CD4-positive, alpha-beta memory T cell (primary cell): ENCODE measurements at regions of chr7 and their contacts with region 1.

Region 1: DNA sequence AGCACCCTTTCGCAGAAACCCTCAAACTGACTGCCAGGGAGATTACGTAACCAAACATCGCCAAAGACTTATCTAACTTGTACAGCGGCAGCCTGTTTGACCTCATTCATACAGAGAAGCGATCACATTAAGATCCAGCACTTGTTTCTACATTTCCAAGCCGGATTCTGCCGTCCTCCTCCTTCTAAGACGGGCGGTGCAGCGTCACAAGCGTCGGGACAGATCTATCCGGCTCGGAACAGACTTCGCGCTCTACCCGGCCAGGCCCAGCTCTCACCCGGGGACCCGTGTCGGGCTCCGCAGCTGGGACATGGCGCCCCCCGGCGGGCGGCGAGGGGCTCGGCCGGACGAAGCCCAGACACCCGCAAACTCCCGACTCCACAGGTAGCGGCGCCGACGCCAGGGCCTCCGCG is 373 bp downstream of the H2AZ2 start:
- DNase-seq: peak; percentile 91 to 93 (median 92)
- H3K4me3 ChIP-seq: peak overlapping the region; percentile 49 to 62
- H3K4me3 Mint-ChIP-seq: peak overlapping the region; percentile 87 to 98 (median 96)
- H3K27ac ChIP-seq: peak overlapping the region; percentile 90
- H3K27ac Mint-ChIP-seq: peak overlapping the region; percentile 97 to 100 (median 100)
- H3K4me1 ChIP-seq: peaks cover 29% of the 10 kb centered on the region
- H3K4me1 Mint-ChIP-seq: peaks cover 18 to 46% (median 25%) of the 10 kb centered on the region in 4 donors
- H3K27me3 ChIP-seq: no peaks in the 10 kb centered on the region
- H3K27me3 Mint-ChIP-seq: peaks cover 0 to 1% of the 10 kb centered on the region in 2 donors

Region 2: GRCh38 chr7:44573464-44574286 is 273.8 kb before region 1 on chr7 and contains the start of gene DDX56:
- CTCF ChIA-PET with region 1: no interaction called
- POLR2A ChIA-PET with region 1: interaction called, 24 read pairs
- intact Hi-C with region 1: no loop called
- DNase-seq: peak; percentile 87 to 93 (median 88)
- H3K4me3 ChIP-seq: peak within 1 kb of the TSS; percentile 93
- H3K4me3 Mint-ChIP-seq: peak within 1 kb of the TSS; percentile 94 to 99 (median 96)
- H3K27ac ChIP-seq: peak within 1 kb of the TSS; percentile 94
- H3K27ac Mint-ChIP-seq: peak within 1 kb of the TSS; percentile 97 to 99 (median 99)
- H3K4me1 ChIP-seq: peaks cover 30% of the 10 kb centered on the region
- H3K4me1 Mint-ChIP-seq: peaks cover 26 to 41% (median 34%) of the 10 kb centered on the region in 4 donors
- H3K27me3 ChIP-seq: no peaks in the 10 kb centered on the region
- H3K27me3 Mint-ChIP-seq: no peaks in the 10 kb centered on the region
- total RNA-seq, gene DDX56: 109 to 114 TPM

Region 3: GRCh38 chr7:44633254-44634186 is 214.0 kb before region 1 on chr7:
- CTCF ChIA-PET with region 1: interaction called, 5 read pairs
- POLR2A ChIA-PET with region 1: interaction called, 37 read pairs
- intact Hi-C with region 1: loop called (anchors 2 kb)
- DNase-seq: peak; percentile 76 to 93 (median 85)
- H3K4me3 ChIP-seq: peak overlapping the region in 1 of 2 donors; percentile 30
- H3K4me3 Mint-ChIP-seq: peak overlapping the region; percentile 21 to 88 (median 75)
- H3K27ac ChIP-seq: peak overlapping the region; percentile 96
- H3K27ac Mint-ChIP-seq: peak overlapping the region; percentile 97 to 100 (median 100)
- H3K4me1 ChIP-seq: peaks cover 100% of the 10 kb centered on the region
- H3K4me1 Mint-ChIP-seq: peaks cover 66 to 98% (median 88%) of the 10 kb centered on the region in 4 donors
- H3K27me3 ChIP-seq: no peaks in the 10 kb centered on the region
- H3K27me3 Mint-ChIP-seq: no peaks in the 10 kb centered on the region

Region 4: DNA sequence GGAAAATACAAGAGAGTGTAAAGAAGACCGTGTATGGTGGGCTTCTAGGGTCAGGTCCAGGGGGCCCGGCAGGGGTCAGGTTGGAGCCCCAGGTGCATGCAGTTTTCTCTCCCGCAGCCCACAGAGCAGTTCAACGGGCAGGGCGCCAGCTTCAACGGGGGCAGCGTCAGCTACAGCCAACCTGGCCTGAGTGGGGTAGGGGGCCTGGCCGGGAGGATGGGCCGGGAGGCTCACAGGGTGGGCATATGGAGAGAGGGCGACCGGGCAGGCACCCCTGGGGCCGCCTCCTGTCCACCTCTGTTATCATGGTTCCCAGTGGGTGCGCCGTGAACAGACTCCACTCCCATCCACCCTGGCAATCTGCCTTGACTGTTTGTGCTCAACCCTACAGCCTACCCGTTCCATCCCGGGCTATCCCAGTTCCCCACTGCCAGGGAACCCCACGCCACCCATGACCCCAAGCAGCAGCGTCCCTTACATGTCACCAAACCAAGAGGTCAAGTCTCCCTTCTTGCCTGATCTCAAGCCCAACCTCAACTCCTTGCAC is 87.4 kb before region 1 on chr7:
- CTCF ChIA-PET with region 1: no interaction called
- POLR2A ChIA-PET with region 1: no interaction called
- intact Hi-C with region 1: no loop called
- DNase-seq: no peak
- H3K4me3 ChIP-seq: no peak overlapping the region
- H3K4me3 Mint-ChIP-seq: no peak overlapping the region
- H3K27ac ChIP-seq: no peak overlapping the region
- H3K27ac Mint-ChIP-seq: peak overlapping the region in 3 of 7 donors; percentile 46 to 57 (median 53)
- H3K4me1 ChIP-seq: peaks cover 9% of the 10 kb centered on the region
- H3K4me1 Mint-ChIP-seq: peaks cover 0 to 15% (median 2%) of the 10 kb centered on the region in 4 donors
- H3K27me3 ChIP-seq: no peaks in the 10 kb centered on the region
- H3K27me3 Mint-ChIP-seq: no peaks in the 10 kb centered on the region

Region 5: DNA sequence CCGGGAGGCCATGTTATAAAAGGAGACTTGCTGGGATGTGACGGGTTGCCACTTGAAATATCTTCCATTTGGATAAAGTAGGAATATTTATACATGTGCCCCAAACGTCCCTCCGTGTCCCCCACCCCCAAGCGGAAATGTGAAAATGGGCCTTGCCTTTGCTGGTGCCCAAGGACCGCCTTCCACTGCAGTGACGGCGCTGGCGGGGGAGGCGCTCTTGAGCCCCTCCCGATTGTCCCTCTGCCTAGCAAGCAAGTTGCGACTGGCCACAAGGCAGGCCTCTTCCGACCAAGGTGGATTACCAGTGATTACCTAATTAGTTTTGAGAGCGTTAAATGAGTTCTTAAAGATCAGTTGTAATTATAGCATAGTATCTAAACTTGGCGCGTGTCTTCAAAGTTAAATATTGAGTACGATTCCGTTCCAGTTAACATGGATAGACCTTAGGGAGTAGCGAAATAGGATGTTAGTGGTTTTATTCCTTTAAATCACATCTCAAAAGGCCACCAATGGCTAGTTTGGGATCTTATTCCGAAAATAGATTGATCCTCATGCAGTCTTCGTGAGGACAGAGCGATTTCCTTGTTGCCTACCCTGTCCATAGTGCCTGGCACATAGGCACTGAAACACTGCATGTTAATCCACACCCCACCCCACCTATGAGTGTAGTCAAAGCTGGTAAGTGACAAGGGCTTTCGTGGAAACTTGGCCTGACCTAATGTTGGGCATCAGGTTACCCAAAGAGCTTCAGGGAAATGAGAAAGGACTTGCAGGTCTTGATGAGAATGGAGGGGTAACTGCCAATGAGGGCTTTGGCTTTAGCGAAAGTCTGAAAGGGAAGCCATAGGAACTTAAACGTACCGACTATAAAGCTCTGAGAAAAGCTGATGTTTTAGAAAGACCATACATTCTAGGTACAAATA is 49.9 kb before region 1 on chr7:
- CTCF ChIA-PET with region 1: interaction called, 18 read pairs
- POLR2A ChIA-PET with region 1: interaction called, 47 read pairs
- intact Hi-C with region 1: loop called (anchors 1 kb)
- DNase-seq: peak; percentile 80 to 92 (median 84)
- H3K4me3 ChIP-seq: peak overlapping the region; percentile 73 to 83
- H3K4me3 Mint-ChIP-seq: peak overlapping the region; percentile 87 to 97 (median 94)
- H3K27ac ChIP-seq: peak overlapping the region; percentile 96
- H3K27ac Mint-ChIP-seq: peak overlapping the region; percentile 94 to 98 (median 97)
- H3K4me1 ChIP-seq: peaks cover 34% of the 10 kb centered on the region
- H3K4me1 Mint-ChIP-seq: peaks cover 18 to 57% (median 30%) of the 10 kb centered on the region in 4 donors
- H3K27me3 ChIP-seq: no peaks in the 10 kb centered on the region
- H3K27me3 Mint-ChIP-seq: no peaks in the 10 kb centered on the region

Region 6: DNA sequence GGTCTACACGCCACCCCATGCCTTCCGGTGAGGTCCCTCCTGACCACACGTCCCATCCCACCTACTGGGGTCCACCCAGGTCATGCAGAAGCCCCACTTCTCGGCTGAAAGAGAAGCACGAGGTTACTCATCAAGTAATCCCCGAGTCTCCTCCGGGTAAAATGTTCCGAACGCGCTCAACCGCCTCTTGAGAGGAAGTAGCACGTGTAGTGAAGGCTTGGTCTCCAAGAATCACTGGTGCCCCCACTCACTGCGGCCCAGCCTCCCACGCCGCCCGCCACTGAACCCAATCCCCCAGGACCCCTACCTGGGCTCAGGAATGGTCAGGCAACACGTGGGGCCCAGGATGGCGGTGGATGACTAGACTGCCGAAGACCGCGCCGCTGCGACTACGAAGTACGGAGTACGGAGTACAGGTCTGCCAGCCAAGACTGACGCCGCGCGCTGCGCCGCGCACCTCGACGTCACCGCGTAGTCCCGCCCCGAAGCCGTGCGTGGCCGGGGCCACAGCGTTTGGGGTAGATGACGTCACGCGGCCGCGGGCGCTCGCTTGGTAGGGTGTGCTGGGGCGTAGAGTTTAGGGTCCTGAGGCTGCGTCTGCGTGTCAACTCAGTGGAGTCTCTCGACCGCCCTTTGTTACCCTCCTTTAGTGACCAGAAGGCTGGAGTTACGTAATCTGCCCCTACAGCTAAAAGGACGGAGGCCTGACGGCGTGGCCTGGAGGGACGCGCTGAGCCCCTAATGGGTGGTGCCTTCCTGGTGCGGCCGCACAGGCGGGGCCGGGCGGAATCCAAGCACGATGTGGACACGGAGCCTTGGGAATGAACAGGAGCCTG is 138.9 kb after region 1 on chr7:
- CTCF ChIA-PET with region 1: no interaction called
- POLR2A ChIA-PET with region 1: interaction called, 3 read pairs
- intact Hi-C with region 1: loop called (anchors 1 kb)
- DNase-seq: peak; percentile 94 to 96 (median 95)
- H3K4me3 ChIP-seq: peak overlapping the region; percentile 76 to 82
- H3K4me3 Mint-ChIP-seq: peak overlapping the region; percentile 95 to 98 (median 96)
- H3K27ac ChIP-seq: peak overlapping the region; percentile 98
- H3K27ac Mint-ChIP-seq: peak overlapping the region; percentile 98 to 100 (median 99)
- H3K4me1 ChIP-seq: peaks cover 54% of the 10 kb centered on the region
- H3K4me1 Mint-ChIP-seq: peaks cover 35 to 64% (median 48%) of the 10 kb centered on the region in 4 donors
- H3K27me3 ChIP-seq: no peaks in the 10 kb centered on the region
- H3K27me3 Mint-ChIP-seq: no peaks in the 10 kb centered on the region

Region 7: GRCh38 chr7:45136106-45137060 is 288.9 kb after region 1 on chr7:
- CTCF ChIA-PET with region 1: interaction called, 17 read pairs
- POLR2A ChIA-PET with region 1: interaction called, 3 read pairs
- intact Hi-C with region 1: no loop called
- DNase-seq: peak; percentile 65 to 77 (median 74)
- H3K4me3 ChIP-seq: no peak overlapping the region
- H3K4me3 Mint-ChIP-seq: peak overlapping the region in 1 of 8 donors; percentile 55
- H3K27ac ChIP-seq: no peak overlapping the region
- H3K27ac Mint-ChIP-seq: peak overlapping the region in 5 of 7 donors; percentile 1 to 86 (median 73)
- H3K4me1 ChIP-seq: peaks cover 4% of the 10 kb centered on the region
- H3K4me1 Mint-ChIP-seq: peaks cover 6 to 11% (median 9%) of the 10 kb centered on the region in 4 donors
- H3K27me3 ChIP-seq: no peaks in the 10 kb centered on the region
- H3K27me3 Mint-ChIP-seq: no peaks in the 10 kb centered on the region